ENCODE measurements at regions of chr17 and their contacts with region 1.

Region 1: DNA sequence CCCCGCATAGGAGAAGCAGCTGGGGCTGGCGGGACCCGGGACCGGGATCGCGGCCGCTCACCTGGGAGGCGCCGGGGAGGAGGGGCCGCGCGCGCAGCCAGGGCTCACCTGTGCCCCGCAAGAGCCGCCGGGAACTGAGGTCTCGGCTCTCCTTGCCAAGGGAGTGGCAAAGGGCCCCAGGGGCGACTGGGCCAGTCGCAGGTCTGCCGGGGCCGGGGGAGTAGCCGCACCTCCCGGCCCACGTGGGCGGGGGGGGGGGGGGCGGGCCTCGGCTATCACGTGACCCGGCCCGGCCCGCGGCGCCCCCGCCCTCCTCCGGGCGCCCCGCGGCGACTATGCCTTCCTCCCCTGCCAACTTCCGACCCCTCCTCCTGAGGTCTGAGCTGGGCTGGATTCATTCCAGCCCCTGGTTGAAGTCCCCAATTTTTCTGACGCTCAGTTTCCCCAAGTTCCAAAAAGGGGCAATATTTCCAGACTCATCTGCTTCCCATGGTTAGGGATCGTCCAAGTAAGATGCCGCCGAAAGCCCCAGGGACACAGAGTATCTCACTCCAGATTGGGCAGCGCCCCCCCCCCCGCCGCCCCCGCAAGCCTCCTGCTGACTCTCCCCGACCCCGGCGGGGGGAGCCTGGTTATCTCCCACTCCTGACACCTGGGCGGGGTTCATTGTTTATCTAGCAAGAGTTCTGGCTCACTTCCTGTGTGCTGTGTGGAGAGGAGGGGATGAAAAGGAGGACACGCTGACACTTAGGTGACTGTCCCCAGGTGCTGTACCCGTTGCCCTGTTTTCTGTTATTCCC is at the start of gene TMC6:
- H3K4me3 Mint-ChIP-seq: peak within 1 kb of the TSS; percentile 93
- H3K27ac Mint-ChIP-seq: peak within 1 kb of the TSS; percentile 93
- H3K4me1 Mint-ChIP-seq: peaks cover 91% of the 10 kb centered on the region
- H3K27me3 Mint-ChIP-seq: peaks cover 3% of the 10 kb centered on the region

Region 2: GRCh38 chr17:78112518-78113226 is 16.1 kb before region 1 on chr17:
- intact Hi-C with region 1: loop called (anchors 2 kb)
- H3K4me3 Mint-ChIP-seq: no peak overlapping the region
- H3K27ac Mint-ChIP-seq: peak overlapping the region; percentile 3
- H3K4me1 Mint-ChIP-seq: peaks cover 38% of the 10 kb centered on the region
- H3K27me3 Mint-ChIP-seq: no peaks in the 10 kb centered on the region

Region 3: DNA sequence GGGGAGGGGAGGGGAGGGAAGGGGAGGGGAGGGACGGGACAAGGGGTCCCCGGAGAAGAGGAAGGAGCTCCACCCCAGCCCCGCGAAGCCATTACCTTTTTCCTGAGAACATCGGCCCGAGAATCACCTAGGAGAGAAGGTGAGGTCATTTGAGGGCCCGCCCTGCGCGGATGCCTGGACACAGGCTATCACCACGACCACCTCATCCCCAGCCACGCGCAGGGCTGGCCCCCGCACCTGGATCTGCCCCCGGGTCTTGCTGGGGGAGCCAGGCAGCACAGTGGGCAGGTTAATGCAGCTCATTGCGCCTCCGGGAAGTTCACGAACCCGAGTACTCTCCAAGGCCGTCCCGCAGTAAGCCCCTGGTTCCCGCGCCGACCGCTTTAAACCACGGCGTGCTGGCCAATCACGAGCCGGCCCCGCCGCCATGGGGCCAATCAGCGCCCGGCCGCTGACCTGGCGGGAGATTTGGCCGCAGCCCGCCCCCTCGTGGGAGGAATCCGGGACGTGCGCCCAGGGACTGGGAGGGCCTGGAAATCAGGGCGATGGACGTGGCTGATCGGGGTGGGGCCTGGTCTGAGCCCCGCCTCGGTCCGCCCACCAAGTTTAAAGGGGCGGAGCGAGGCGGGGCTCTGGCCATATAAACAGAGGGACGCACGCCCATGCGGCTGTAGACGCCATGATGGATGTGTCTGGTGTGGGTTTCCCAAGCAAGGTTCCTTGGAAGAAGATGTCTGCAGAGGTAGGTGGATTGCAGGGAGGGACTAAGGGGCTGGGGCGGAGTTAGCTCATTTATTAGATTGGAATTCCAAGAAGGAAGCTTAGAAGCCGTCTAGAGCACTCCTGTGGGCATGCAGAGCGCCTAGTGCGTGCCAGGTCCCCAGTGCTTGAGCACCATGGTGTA is 58.2 kb after region 1 on chr17 and contains the starts of genes AFMID and TK1:
- intact Hi-C with region 1: loop called (anchors 5 kb)
- H3K4me3 Mint-ChIP-seq: peak within 1 kb of the TSS; percentile 73
- H3K27ac Mint-ChIP-seq: peak within 1 kb of the TSS; percentile 78
- H3K4me1 Mint-ChIP-seq: peaks cover 51% of the 10 kb centered on the region
- H3K27me3 Mint-ChIP-seq: no peaks in the 10 kb centered on the region